ENCODE measurements at regions of chr2 and their contacts with region 1.

Region 1: GRCh38 chr2:165757906-165758675 is 36.0 kb downstream of the GALNT3 start:
- DNase-seq: no peak
- ATAC-seq: no peak
- H3K4me3 ChIP-seq: no peak overlapping the region
- H3K27ac ChIP-seq: no peak overlapping the region
- H3K4me1 ChIP-seq: no peaks in the 10 kb centered on the region
- H3K27me3 ChIP-seq: no peaks in the 10 kb centered on the region
- CTCF ChIP-seq: no peak
- EP300 ChIP-seq: no peak
- POLR2A ChIP-seq: no peak
- RAD21 ChIP-seq: no peak

Region 2: DNA sequence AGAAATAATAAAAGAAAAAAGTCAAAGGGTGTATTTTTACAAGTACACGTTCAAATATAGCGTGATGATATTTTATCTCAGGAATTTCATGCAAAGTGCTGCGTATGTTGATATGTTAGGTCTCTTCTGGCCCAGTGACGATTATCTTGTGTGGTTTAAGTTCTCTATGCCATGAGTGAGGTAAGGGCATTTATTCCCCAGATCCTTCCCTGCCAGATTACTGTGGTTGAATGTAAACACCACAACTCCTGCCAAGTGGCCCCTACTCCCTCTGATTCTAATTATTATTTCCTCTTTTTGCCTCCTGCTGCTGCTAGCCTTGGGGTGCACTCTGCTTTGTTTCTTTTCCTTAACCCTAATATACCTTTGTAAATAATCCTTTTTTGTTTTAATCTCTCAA is 506.7 kb before region 1 on chr2:
- CTCF ChIA-PET with region 1: no interaction called
- POLR2A ChIA-PET with region 1: interaction called, 14 read pairs
- RAD21 ChIA-PET with region 1: no interaction called
- SMC1A ChIA-PET with region 1: no interaction called
- in situ Hi-C with region 1: no loop called
- intact Hi-C with region 1: no loop called
- DNase-seq: no peak
- ATAC-seq: no peak
- H3K4me3 ChIP-seq: no peak overlapping the region
- H3K27ac ChIP-seq: no peak overlapping the region
- H3K4me1 ChIP-seq: no peaks in the 10 kb centered on the region
- H3K27me3 ChIP-seq: no peaks in the 10 kb centered on the region
- CTCF ChIP-seq: no peak
- EP300 ChIP-seq: no peak
- POLR2A ChIP-seq: no peak
- RAD21 ChIP-seq: no peak

Measured in GM12878 (cell line).